K562 (cell line): ENCODE measurements at regions of chr15 and their contacts with region 1.

Region 1: GRCh38 chr15:58749532-58750337 is at the start of gene ADAM10:
- DNase-seq: peak; percentile 99
- ATAC-seq: peak; percentile 87
- H3K4me3 ChIP-seq: peak within 1 kb of the TSS; percentile 89
- H3K27ac ChIP-seq: peak within 1 kb of the TSS; percentile 92
- H3K4me1 ChIP-seq: peaks cover 5 to 19% of the 10 kb centered on the region in 2 experiments; a peak in 4 of 5 replicates
- H3K27me3 ChIP-seq: no peaks in the 10 kb centered on the region
- CTCF ChIP-seq: no peak
- EP300 ChIP-seq: no peak
- POLR2A ChIP-seq: peak; percentile 91
- RAD21 ChIP-seq: no peak
- polyA plus RNA-seq, gene ADAM10: 11.9 to 14.0 TPM

Region 2: DNA sequence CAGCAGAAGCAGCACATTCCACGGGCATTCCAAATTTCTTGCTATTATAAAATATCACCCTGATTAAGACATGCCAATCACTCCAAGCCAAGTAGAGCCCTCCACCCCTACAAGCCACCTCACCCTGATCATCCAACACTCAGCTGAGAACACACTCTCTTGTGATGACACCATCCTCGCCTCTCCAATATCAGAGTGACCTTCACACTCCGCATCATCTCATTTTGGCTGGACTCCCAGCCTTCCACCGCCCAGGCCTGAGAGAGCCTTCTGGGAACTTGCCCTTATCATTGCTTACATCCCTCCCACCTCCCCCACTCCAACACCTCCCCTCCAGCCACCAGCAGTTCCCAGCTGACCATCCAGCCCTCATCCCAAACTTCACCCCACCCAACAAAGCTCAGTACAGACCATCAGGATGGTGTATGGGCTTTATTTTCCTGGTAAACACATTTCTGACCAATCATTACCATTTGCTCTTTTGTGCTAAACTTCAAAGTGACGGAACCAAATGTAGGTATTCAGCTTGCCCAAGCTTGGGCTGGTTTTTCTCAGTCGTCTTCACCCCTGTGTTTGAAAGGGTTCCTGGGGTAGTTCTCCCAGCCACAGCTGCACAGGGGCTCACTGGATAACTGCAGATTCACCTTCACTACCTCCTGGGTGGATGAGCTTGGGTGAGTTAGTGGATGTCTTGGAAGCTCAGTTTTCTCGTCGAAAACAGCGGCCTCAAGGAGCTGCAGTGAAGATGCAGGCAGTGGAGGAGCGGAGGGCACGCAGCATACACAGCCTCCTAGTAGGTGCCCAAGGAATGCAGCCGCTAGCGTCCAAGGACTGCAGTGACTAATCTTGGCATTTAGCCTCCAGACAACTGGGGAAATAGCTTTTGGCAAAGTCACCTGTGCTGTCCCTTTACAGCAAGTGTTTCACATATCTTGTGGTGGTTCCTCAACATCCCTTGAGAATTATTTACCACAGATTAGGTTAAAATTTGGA is 202.8 kb before region 1 on chr15:
- CTCF ChIA-PET with region 1: no interaction called
- POLR2A ChIA-PET with region 1: interaction called, 3 read pairs
- in situ Hi-C with region 1: no loop called
- intact Hi-C with region 1: loop called (anchors 5 kb)
- DNase-seq: peak; percentile 82 to 97 (median 88)
- ATAC-seq: peak; percentile 93
- H3K4me3 ChIP-seq: no peak overlapping the region
- H3K27ac ChIP-seq: peak overlapping the region; percentile 68
- H3K4me1 ChIP-seq: peaks cover 43 to 45% of the 10 kb centered on the region in 2 experiments
- H3K27me3 ChIP-seq: no peaks in the 10 kb centered on the region
- CTCF ChIP-seq: no peak
- EP300 ChIP-seq: peak; percentile 80
- POLR2A ChIP-seq: 0 out of 2 replicates have a peak, but pooled peaks have one; percentile 30
- RAD21 ChIP-seq: 0 out of 4 replicates have a peak, but pooled peaks of 1 of the 2 experiments have one; percentile 1

Region 3: DNA sequence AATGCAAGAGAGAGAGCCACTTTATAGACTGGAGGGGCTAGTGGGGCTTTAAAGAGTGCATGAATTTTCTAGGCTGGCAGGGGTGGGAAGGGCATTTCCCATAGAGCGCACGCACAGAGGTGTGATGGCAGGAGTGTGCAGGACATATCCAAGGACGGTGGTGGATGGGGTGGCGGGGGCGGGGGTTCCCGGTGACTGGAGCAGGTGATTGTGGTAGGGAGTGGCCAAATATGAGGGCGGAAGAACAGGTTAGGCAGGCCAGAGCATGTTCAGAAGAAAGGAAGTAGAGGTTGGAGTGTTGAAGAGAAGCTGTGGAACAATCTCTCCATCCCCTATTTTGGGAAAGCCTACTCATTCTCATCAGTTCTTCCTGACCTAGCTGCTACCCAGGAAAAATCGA is 706.4 kb after region 1 on chr15:
- CTCF ChIA-PET with region 1: no interaction called
- POLR2A ChIA-PET with region 1: no interaction called
- in situ Hi-C with region 1: no loop called
- intact Hi-C with region 1: no loop called
- DNase-seq: no peak
- ATAC-seq: no peak
- H3K4me3 ChIP-seq: no peak overlapping the region
- H3K27ac ChIP-seq: no peak overlapping the region
- H3K4me1 ChIP-seq: no peaks in the 10 kb centered on the region
- H3K27me3 ChIP-seq: peaks cover 2 to 5% of the 10 kb centered on the region in 2 experiments; a peak in 3 of 5 replicates
- CTCF ChIP-seq: no peak
- EP300 ChIP-seq: no peak
- POLR2A ChIP-seq: no peak
- RAD21 ChIP-seq: no peak